ENCODE measurements at regions of chr6 and their contacts with region 1.

Region 1: DNA sequence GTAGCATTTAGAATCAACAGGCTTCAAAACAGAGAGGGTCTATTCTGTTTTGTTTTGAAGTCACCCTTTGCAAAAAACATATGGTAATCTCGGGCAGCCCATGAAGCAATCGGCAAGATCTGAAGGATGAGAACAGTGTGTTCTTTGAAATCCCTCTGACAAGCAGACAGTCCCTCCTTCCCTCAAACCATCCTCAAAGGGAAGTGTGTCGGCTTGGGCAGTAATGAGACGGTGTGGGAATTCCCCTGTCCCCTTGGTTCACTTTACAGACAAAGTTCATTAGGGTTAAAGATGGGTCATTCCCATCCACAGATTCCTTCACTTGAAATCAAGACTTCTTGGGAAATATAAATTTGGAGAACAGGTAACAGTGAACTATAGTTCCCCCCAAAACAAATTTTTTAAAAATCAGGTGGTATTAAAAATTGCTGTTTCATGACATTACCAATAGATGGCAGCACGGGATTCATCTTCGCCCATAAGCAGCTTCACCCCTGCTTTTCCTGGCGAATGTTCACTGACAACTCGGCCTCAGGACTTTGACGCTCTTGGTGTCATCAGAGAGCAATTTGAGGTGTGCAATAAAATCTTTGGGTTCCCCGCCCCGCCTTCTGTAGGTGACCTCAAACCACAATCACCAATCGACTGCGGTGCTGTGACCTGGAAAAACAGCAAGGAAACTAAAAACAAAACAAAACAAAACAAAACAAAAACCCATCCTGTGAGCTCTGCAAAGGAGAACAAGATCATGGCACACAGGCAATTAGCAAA is 159.3 kb upstream of the TNFAIP3 start:
- DNase-seq: peak; percentile 89
- ATAC-seq: peak; percentile 67
- H3K4me3 Mint-ChIP-seq: peak overlapping the region; percentile 67
- H3K27ac Mint-ChIP-seq: peak overlapping the region; percentile 89
- H3K4me1 Mint-ChIP-seq: peaks cover 65% of the 10 kb centered on the region
- H3K27me3 Mint-ChIP-seq: no peaks in the 10 kb centered on the region
- CTCF ChIP-seq: peak; percentile 77

Region 2: DNA sequence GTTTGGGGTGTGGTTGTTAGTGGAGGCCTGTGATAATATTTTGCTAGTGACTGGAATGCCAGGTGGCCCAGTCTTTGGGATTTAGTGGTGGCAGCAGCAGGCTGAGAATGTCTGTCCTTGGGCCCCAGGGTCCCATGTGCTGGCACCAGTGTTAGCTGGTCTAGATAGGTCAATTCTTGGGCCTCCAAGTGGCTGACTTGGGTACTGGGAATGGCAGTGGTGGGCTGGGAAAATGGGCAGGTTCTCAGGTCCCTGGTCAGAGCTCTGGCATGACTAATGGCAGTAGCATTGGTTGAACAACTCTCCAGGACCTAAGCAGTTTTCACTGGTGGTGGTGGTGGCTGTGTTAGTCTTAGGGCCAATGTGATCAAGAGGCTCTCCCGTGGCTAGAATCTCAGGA is 263.9 kb before region 1 on chr6:
- CTCF ChIA-PET with region 1: no interaction called
- POLR2A ChIA-PET with region 1: no interaction called
- intact Hi-C with region 1: no loop called
- DNase-seq: no peak
- ATAC-seq: no peak
- H3K4me3 Mint-ChIP-seq: no peak overlapping the region
- H3K27ac Mint-ChIP-seq: no peak overlapping the region
- H3K4me1 Mint-ChIP-seq: peaks cover 8% of the 10 kb centered on the region
- H3K27me3 Mint-ChIP-seq: no peaks in the 10 kb centered on the region
- CTCF ChIP-seq: no peak

Region 3: DNA sequence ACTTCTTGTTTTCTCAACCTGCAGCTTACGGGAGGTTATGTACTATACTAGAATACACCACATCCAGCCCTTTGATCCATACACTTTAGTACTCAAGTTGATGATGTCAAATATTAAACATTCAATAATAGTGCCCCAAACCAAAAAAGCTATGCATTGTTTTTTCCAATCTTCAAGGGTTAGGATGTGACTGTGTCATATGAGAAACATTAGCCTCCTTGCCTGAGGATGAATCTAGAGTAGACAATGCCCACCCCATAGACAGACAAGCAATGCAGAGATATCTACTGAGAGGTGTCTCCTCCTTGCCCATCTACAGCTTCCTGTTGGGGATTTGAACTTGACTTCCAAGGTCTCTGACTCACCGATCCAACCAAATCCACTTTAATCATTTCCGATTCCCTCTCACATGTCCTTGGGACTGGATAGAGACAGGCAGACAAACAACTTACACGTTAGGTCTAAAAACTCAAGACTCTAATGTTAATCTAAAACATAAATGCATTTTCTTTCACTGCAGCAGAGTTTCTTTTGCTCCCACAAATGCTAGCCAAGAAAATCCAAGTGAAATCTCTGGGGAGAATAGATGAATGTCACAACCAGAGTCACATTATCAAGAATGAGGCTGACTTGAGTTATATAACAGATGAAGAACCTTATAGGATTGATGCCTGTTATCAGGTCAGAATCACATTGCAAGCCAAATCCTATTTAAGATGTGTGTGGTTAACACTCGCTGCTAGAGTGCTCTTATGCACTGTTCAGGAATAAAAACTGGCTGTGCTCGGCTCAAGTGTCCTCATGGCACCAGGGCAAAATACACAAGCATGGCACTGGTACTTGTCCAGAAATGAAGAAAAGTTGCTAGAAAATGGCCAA is 83.7 kb after region 1 on chr6:
- CTCF ChIA-PET with region 1: interaction called, 12 read pairs
- POLR2A ChIA-PET with region 1: interaction called, 6 read pairs
- intact Hi-C with region 1: loop called (anchors 2 kb)
- DNase-seq: no peak
- ATAC-seq: peak; percentile 13
- H3K4me3 Mint-ChIP-seq: peak overlapping the region; percentile 47
- H3K27ac Mint-ChIP-seq: peak overlapping the region; percentile 56
- H3K4me1 Mint-ChIP-seq: peaks cover 54% of the 10 kb centered on the region
- H3K27me3 Mint-ChIP-seq: no peaks in the 10 kb centered on the region
- CTCF ChIP-seq: no peak

Region 4: GRCh38 chr6:137866914-137867684 is 159.3 kb after region 1 on chr6 and contains the start of gene TNFAIP3:
- CTCF ChIA-PET with region 1: interaction called, 43 read pairs
- POLR2A ChIA-PET with region 1: interaction called, 44 read pairs
- intact Hi-C with region 1: loop called (anchors 1 kb)
- DNase-seq: peak; percentile 97
- ATAC-seq: peak; percentile 70
- H3K4me3 Mint-ChIP-seq: peak within 1 kb of the TSS; percentile 98
- H3K27ac Mint-ChIP-seq: peak within 1 kb of the TSS; percentile 99
- H3K4me1 Mint-ChIP-seq: peaks cover 39% of the 10 kb centered on the region
- H3K27me3 Mint-ChIP-seq: no peaks in the 10 kb centered on the region
- CTCF ChIP-seq: peak; percentile 60
- total RNA-seq, gene TNFAIP3: 399 to 402 TPM

Region 5: DNA sequence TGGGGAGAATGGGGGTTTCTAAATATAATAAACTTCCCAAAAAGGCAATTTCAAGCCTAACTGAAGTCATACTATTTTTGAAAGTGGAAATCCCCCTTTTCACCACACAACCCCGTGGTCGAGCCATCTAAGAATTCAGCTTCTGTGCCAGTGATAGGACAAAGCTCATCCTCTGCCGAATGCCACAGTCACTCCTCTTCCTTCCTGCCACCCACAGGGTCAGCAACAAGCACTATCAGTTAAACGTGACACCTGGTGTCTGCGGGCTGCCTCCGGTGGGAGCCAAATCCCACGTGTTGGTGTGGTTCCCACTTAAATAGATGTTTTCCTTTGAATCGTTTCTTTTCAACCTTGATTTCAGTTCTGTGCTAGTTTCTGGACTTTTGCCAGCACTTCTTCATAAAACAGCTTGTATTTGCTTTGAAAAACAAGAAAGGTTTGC is 220.0 kb after region 1 on chr6:
- CTCF ChIA-PET with region 1: interaction called, 11 read pairs
- POLR2A ChIA-PET with region 1: no interaction called
- intact Hi-C with region 1: no loop called
- DNase-seq: peak; percentile 93
- ATAC-seq: peak; percentile 94
- H3K4me3 Mint-ChIP-seq: peak overlapping the region; percentile 65
- H3K27ac Mint-ChIP-seq: peak overlapping the region; percentile 97
- H3K4me1 Mint-ChIP-seq: peaks cover 78% of the 10 kb centered on the region
- H3K27me3 Mint-ChIP-seq: no peaks in the 10 kb centered on the region
- CTCF ChIP-seq: no peak

Region 6: DNA sequence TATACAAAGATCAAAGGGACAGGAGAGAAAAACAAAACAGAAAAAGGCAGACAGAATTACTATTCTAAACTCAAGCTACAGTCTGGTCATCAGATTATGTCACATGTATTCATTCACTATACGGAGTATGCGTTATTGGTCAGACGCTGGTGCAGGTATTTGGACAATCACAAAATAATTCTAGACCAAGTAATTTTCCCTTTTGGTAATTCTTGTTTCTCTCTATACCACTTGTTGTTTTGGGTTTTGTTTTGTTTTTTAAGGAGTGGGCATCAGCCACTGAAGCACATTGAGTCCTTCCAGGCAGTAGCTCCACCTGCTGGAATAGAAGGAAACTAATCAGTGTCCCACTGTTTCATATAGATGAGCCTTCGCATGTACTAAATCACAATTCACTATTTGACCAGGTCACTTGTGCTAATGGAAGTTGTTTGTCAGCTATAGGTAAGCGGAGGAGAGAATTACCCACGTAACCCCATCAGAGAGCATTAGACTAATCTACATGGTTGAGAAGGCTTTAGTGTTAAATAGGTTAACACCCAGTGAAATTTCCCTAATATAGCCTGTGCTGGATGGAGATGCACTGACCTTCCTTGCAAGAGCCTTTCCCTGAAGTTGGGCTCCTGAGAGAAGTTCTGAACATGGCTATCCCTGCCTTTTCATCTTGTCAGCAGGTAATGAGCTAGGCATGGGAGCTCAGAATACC is 237.2 kb after region 1 on chr6:
- CTCF ChIA-PET with region 1: interaction called, 28 read pairs
- POLR2A ChIA-PET with region 1: interaction called, 3 read pairs
- intact Hi-C with region 1: loop called (anchors 2 kb)
- DNase-seq: no peak
- ATAC-seq: peak; percentile 31
- H3K4me3 Mint-ChIP-seq: no peak overlapping the region
- H3K27ac Mint-ChIP-seq: peak overlapping the region; percentile 4
- H3K4me1 Mint-ChIP-seq: peaks cover 53% of the 10 kb centered on the region
- H3K27me3 Mint-ChIP-seq: no peaks in the 10 kb centered on the region
- CTCF ChIP-seq: peak; percentile 79

Region 7: GRCh38 chr6:137975188-137975940 is 267.6 kb after region 1 on chr6:
- CTCF ChIA-PET with region 1: interaction called, 31 read pairs
- POLR2A ChIA-PET with region 1: no interaction called
- intact Hi-C with region 1: loop called (anchors 1 kb)
- DNase-seq: peak; percentile 64
- ATAC-seq: peak; percentile 69
- H3K4me3 Mint-ChIP-seq: peak overlapping the region; percentile 70
- H3K27ac Mint-ChIP-seq: peak overlapping the region; percentile 94
- H3K4me1 Mint-ChIP-seq: peaks cover 70% of the 10 kb centered on the region
- H3K27me3 Mint-ChIP-seq: no peaks in the 10 kb centered on the region
- CTCF ChIP-seq: peak; percentile 82

Region 8: DNA sequence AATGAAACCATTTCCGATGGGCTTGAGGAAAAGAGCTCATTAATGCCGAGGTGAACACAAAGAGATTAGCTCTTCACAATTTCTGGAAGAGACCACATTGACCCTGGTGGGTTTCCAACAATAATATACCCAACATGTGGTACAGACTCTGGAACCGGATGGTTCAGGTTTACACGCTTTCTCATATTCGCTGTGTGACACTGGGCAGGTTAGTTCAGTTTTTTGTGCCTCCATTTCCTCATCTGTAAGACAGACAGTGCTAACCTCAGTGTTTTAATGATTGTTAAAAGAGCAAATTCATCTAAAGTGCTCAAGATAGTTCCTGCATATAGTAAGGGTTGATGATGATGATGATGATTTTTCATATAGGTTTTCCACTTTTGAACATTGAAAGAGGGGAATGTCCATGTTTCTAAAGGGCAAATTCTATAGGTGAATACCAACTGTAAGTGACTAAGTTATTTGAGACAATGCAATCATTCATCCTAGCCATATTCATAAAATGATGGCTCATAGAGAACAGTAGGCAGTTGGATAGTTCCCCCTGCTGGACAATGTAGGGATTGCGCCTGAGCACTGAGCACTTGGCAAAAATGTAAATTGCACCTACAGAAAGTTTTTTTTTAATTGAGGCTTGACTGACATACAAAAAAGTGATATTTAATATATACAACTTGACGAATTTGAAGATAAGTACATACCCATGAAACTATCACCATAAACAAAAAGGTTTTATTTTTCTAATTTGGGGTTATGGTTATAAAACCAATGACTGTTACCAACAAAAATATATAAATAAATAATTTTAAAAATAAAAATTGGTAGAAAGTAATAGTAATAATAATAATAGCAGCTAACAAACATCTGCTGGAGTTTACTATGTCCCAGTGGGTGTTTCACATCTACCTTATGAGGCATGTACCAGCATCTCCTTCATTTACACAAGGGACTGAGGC is 401.5 kb after region 1 on chr6:
- CTCF ChIA-PET with region 1: interaction called, 4 read pairs
- POLR2A ChIA-PET with region 1: no interaction called
- intact Hi-C with region 1: loop called (anchors 5 kb)
- DNase-seq: peak; percentile 93
- ATAC-seq: peak; percentile 69
- H3K4me3 Mint-ChIP-seq: no peak overlapping the region
- H3K27ac Mint-ChIP-seq: no peak overlapping the region
- H3K4me1 Mint-ChIP-seq: peaks cover 16% of the 10 kb centered on the region
- H3K27me3 Mint-ChIP-seq: peaks cover 38% of the 10 kb centered on the region
- CTCF ChIP-seq: peak; percentile 87